ENCODE measurements at regions of chr6 and their contacts with region 1.

Region 1: GRCh38 chr6:26031595-26032339 is 55.5 kb upstream of the HFE start:
- DNase-seq: peak; percentile 90
- H3K4me3 Mint-ChIP-seq: peak overlapping the region; percentile 92
- H3K27ac Mint-ChIP-seq: peak overlapping the region; percentile 98
- H3K4me1 Mint-ChIP-seq: peaks cover 72% of the 10 kb centered on the region
- H3K27me3 Mint-ChIP-seq: no peaks in the 10 kb centered on the region

Region 2: GRCh38 chr6:26045065-26045927 is 13.5 kb after region 1 on chr6:
- intact Hi-C with region 1: loop called (anchors 1 kb)
- DNase-seq: peak; percentile 81
- H3K4me3 Mint-ChIP-seq: peak overlapping the region; percentile 81
- H3K27ac Mint-ChIP-seq: peak overlapping the region; percentile 99
- H3K4me1 Mint-ChIP-seq: peaks cover 39% of the 10 kb centered on the region
- H3K27me3 Mint-ChIP-seq: no peaks in the 10 kb centered on the region

Region 3: GRCh38 chr6:26054857-26055669 is 23.3 kb after region 1 on chr6:
- intact Hi-C with region 1: loop called (anchors 1 kb)
- DNase-seq: peak; percentile 85
- H3K4me3 Mint-ChIP-seq: peak overlapping the region; percentile 90
- H3K27ac Mint-ChIP-seq: peak overlapping the region; percentile 99
- H3K4me1 Mint-ChIP-seq: peaks cover 33% of the 10 kb centered on the region
- H3K27me3 Mint-ChIP-seq: no peaks in the 10 kb centered on the region

Region 4: DNA sequence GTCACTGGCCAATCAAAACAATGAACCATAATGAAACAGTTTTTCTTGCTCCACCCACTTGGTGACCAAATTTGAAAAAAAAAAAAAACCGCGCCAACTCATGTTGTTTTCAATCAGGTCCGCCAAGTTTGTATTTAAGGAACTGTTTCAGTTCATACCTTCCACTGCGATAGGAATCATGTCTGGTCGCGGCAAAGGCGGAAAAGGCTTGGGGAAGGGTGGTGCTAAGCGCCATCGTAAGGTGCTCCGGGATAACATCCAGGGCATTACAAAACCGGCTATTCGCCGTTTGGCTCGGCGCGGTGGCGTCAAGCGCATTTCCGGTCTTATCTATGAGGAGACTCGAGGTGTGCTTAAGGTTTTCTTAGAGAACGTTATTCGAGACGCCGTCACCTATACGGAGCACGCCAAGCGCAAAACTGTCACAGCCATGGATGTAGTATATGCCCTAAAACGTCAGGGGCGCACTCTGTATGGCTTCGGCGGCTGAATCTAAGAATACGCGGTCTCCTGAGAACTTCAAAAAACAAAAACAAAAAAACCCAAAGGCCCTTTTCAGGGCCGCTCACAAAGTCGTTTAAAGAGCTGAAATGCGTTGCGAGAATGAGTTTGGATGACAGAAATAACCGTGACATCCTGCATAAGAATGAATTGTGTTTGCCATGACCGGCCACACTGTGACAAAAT is 72.1 kb after region 1 on chr6:
- intact Hi-C with region 1: loop called (anchors 1 kb)
- DNase-seq: peak; percentile 89
- H3K4me3 Mint-ChIP-seq: peak overlapping the region; percentile 76
- H3K27ac Mint-ChIP-seq: peak overlapping the region; percentile 95
- H3K4me1 Mint-ChIP-seq: peaks cover 19% of the 10 kb centered on the region
- H3K27me3 Mint-ChIP-seq: peaks cover 3% of the 10 kb centered on the region

Region 5: DNA sequence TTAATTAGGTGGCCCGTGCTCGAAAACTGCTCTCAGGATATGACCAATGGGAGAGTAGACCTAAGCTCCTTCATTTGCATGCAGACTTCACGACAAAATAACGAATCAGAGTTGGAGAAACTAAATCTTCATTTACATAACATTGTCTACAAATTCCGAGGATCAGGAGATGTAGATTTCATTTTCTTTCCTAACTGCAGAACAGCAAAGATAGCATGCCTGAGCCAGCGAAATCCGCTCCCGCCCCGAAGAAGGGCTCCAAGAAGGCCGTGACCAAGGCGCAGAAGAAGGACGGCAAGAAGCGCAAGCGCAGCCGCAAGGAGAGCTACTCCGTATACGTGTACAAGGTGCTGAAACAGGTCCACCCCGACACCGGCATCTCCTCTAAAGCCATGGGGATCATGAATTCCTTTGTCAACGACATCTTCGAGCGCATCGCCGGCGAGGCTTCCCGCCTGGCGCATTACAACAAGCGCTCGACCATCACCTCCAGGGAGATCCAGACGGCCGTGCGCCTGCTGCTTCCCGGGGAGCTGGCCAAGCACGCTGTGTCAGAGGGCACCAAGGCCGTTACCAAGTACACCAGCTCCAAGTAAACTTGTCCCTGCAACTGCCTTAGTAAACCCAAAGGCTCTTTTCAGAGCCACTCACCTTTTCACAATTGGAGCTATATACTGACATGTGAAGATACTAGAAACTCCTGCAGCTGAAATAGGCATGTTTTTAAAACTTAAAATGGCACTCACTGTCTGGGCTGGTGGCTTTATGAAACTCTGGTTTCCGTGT is 152.0 kb after region 1 on chr6:
- intact Hi-C with region 1: loop called (anchors 2 kb)
- DNase-seq: peak; percentile 78
- H3K4me3 Mint-ChIP-seq: peak overlapping the region; percentile 88
- H3K27ac Mint-ChIP-seq: peak overlapping the region; percentile 96
- H3K4me1 Mint-ChIP-seq: peaks cover 69% of the 10 kb centered on the region
- H3K27me3 Mint-ChIP-seq: no peaks in the 10 kb centered on the region

Region 6: DNA sequence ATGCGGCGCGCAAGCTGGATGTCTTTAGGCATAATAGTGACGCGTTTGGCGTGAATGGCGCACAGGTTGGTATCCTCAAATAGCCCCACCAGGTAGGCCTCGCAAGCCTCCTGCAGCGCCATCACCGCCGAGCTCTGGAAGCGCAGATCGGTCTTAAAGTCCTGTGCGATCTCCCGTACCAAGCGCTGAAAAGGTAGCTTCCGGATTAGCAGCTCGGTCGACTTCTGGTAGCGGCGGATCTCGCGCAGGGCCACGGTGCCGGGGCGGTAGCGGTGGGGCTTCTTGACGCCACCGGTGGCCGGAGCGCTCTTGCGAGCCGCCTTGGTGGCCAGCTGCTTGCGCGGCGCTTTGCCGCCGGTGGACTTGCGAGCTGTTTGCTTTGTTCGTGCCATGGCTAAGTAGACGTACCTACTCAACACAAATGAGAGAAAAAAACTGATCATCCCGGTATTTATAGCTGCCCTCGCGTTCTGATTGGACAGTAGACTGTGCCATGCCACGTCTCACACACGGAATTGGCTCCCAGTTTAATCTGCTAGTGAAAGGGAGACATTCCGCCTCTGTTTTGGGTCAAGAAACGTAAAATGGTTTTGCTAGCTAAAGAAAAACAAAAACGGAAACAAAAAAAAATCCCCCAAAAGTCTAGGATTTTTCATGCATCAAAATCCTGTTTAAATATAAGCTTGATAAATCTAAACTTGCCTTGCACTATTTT is 1840.3 kb after region 1 on chr6:
- intact Hi-C with region 1: loop called (anchors 2 kb)
- DNase-seq: peak; percentile 85
- H3K4me3 Mint-ChIP-seq: peak overlapping the region; percentile 89
- H3K27ac Mint-ChIP-seq: peak overlapping the region; percentile 97
- H3K4me1 Mint-ChIP-seq: peaks cover 50% of the 10 kb centered on the region
- H3K27me3 Mint-ChIP-seq: no peaks in the 10 kb centered on the region

Measured in activated T-helper 2 cell treated with anti-CD3 and anti-CD28 coated beads, Interferon-gamma antibody, Interleukin-2, Interleukin-4, amounts not matched to agents 10 μg/mL and 5 μg/mL and 100 μg/mL, durations not matched to agents 14 hours and 24 hours and 36 hours (primary cell).